K562 (cell line): ENCODE measurements at regions of chr17 and their contacts with region 1.

Region 1: GRCh38 chr17:28105501-28105900 is 63.0 kb downstream of the NLK start:
- DNase-seq: peak; percentile 64 to 85 (median 74)
- ATAC-seq: peak; percentile 98
- H3K4me3 ChIP-seq: no peak overlapping the region
- H3K27ac ChIP-seq: no peak overlapping the region; the same call in 2 of the 3 replicates
- H3K4me1 ChIP-seq: peaks cover 0 to 26% of the 10 kb centered on the region in 2 experiments; a peak in 2 of 5 replicates
- H3K27me3 ChIP-seq: no peaks in the 10 kb centered on the region
- CTCF ChIP-seq: no peak
- EP300 ChIP-seq: peak; percentile 88
- POLR2A ChIP-seq: no peak
- RAD21 ChIP-seq: no peak

Region 2: GRCh38 chr17:28086519-28086918 is 19.0 kb before region 1 on chr17:
- CTCF ChIA-PET with region 1: no interaction called
- POLR2A ChIA-PET with region 1: interaction called, 10 read pairs
- in situ Hi-C with region 1: no loop called
- intact Hi-C with region 1: no loop called
- DNase-seq: no peak
- ATAC-seq: peak; percentile 53; the same call in 1 of the 3 replicates
- H3K4me3 ChIP-seq: no peak overlapping the region
- H3K27ac ChIP-seq: no peak overlapping the region
- H3K4me1 ChIP-seq: peaks cover 0 to 7% of the 10 kb centered on the region in 2 experiments; a peak in 2 of 5 replicates
- H3K27me3 ChIP-seq: no peaks in the 10 kb centered on the region
- CTCF ChIP-seq: no peak
- EP300 ChIP-seq: no peak
- POLR2A ChIP-seq: no peak
- RAD21 ChIP-seq: no peak

Region 3: DNA sequence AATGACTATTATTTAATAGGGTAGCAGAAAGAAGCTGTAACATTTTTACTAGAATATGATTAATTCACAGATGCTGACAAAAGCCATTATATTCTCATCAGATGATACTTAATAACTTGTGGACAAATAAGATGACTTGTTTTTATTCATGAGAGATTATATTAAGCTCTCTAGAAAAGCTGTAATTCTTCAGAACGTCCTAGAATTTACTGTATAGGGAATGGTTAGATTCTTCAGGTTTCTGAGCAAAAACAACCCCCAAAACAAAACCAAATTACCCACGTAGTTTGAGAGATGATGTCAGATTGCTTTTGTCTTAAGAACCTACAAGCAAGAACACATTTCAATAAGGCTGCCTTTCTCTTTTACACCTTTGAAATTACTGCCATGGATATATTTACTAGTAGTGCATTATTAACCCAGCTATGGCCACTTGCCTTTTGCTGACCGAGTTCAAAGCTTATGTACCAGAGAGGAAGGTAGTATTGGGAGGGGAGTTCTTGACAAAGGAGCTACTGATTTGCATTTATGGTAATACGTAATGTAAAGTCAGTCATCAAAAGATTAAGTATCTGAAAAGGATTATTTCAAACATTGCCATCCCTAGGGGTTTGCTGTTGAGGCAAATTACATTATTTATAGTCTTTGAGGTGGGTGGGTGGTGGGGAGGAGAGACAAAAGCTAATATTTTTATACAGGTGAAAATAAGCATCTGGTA is 11.3 kb before region 1 on chr17:
- CTCF ChIA-PET with region 1: no interaction called
- POLR2A ChIA-PET with region 1: interaction called, 13 read pairs
- in situ Hi-C with region 1: no loop called
- intact Hi-C with region 1: no loop called
- DNase-seq: no peak
- ATAC-seq: peak; percentile 47
- H3K4me3 ChIP-seq: no peak overlapping the region
- H3K27ac ChIP-seq: peak overlapping the region; percentile 43; the same call in 1 of the 3 replicates
- H3K4me1 ChIP-seq: peaks cover 0 to 6% of the 10 kb centered on the region in 2 experiments; a peak in 2 of 5 replicates
- H3K27me3 ChIP-seq: no peaks in the 10 kb centered on the region
- CTCF ChIP-seq: no peak
- EP300 ChIP-seq: no peak
- POLR2A ChIP-seq: peak; percentile 89
- RAD21 ChIP-seq: no peak